ENCODE measurements at regions of chr10 and their contacts with region 1.

Region 1: DNA sequence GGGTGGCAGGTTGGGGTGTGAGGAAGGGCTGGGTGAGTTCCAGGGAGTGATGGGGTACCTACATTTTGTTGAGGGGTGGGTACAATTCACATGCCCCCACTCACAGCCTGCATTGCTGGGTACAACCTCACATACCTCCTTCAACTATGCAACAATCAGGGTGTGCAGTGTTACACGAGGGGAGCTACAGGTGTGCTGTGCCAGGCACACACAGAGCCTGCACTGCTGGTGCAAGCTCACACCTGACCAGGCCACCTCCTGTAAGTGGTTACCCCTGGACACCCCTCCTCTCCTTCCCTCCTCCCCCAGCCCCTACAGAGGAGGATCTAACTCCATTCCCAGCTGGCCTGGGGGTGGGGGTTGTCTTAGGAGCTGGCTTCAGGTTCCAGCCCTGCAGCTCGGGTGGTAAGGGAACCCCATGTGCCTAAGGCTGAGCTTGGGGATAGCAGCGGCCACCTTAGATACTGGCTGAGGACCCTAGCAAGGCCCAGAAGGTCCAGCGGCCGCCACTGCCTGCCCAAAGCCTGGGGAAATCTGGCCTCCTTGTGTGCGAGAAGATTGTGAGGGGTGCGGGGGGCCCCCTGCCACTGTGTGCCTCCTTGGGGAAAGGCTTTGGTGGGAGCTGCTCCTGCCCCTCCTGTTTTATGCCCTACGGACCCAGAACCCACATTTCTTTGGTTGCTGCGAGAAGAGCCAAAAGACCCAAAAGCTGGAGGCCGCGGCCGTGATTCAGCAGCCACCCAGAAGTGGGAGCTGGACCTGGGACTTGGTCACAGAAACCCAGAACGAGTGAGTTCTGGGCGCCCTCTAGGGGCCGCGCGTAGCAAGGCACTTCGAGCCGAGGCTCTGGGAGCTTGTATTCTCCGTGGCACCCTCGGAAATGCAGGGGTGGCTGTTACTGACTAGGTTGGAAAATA is 10.8 kb downstream of the TLX1 start:
- DNase-seq: peak; percentile 57 to 85 (median 77)
- ATAC-seq: peak; percentile 93
- H3K4me3 ChIP-seq: no peak overlapping the region
- H3K4me3 Mint-ChIP-seq: peak overlapping the region in 5 of 10 donors; percentile 9 to 53 (median 18)
- H3K27ac ChIP-seq: no peak overlapping the region
- H3K27ac Mint-ChIP-seq: no peak overlapping the region
- H3K4me1 ChIP-seq: peaks cover 0 to 19% of the 10 kb centered on the region in 2 donors
- H3K4me1 Mint-ChIP-seq: peaks cover 10 to 38% (median 26%) of the 10 kb centered on the region in 7 donors
- H3K27me3 ChIP-seq: peaks cover 9 to 43% of the 10 kb centered on the region in 2 donors
- H3K27me3 Mint-ChIP-seq: peaks cover 74 to 97% (median 83%) of the 10 kb centered on the region in 5 donors

Region 2: DNA sequence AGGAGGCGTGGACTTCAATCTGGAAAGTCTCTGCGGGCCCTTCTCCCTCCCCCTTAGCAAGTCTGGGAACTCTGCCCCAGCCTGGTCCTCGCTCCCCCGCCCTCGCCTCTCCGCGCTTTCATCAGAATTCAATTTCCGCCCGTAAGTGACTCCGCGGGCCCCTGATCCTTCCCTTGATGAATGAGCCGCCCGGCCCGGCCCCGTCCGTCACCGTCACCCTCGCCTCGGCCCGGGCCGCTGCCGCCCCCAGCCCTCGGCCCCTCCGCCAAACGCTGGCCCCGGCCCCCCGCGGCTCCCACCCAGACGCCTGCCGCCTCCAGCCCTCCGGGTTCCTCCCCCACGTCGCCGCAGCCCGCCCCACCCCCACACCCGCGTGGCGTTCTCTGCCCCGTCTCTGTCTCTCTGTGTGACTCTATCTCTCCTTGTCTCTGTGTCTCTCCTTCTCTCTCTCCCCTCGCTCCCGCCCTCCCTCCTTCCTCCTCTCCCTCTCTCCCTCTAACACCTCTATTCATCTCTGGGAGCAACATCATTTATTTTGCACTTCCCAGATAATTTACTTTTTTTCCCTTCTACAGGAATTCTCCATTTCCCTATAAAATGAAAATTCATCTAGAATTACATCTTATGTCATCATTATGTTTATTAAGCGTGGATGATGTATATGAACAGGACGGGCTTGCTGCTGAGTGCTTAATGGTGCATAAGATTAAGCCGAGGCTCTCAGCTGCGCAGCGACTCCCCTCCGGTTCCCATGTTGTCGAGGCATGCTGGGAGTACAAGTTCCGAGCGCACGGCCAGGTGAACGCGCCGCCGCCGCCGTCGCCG is 487.7 kb before region 1 on chr10:
- CTCF ChIA-PET with region 1: no interaction called
- POLR2A ChIA-PET with region 1: no interaction called
- intact Hi-C with region 1: loop called in 1 of 2 experiments (anchors 5 kb)
- DNase-seq: peak in 1 of 9 donors; percentile 36
- ATAC-seq: peak; percentile 28
- H3K4me3 ChIP-seq: no peak overlapping the region
- H3K4me3 Mint-ChIP-seq: peak overlapping the region; percentile 64 to 92 (median 85)
- H3K27ac ChIP-seq: no peak overlapping the region
- H3K27ac Mint-ChIP-seq: no peak overlapping the region
- H3K4me1 ChIP-seq: peaks cover 4 to 16% of the 10 kb centered on the region in 2 donors
- H3K4me1 Mint-ChIP-seq: peaks cover 18 to 35% (median 27%) of the 10 kb centered on the region in 7 donors
- H3K27me3 ChIP-seq: peaks cover 19 to 27% of the 10 kb centered on the region in 2 donors
- H3K27me3 Mint-ChIP-seq: peaks cover 68 to 76% (median 75%) of the 10 kb centered on the region in 5 donors

Region 3: GRCh38 chr10:101042667-101043355 is 99.1 kb before region 1 on chr10:
- CTCF ChIA-PET with region 1: interaction called, 21 read pairs
- POLR2A ChIA-PET with region 1: no interaction called
- intact Hi-C with region 1: loop called (anchors 1 to 5 kb)
- DNase-seq: peak; percentile 49 to 86 (median 57)
- ATAC-seq: peak; percentile 87
- H3K4me3 ChIP-seq: peak overlapping the region; percentile 82
- H3K4me3 Mint-ChIP-seq: peak overlapping the region; percentile 86 to 99 (median 94)
- H3K27ac ChIP-seq: peak overlapping the region; percentile 67
- H3K27ac Mint-ChIP-seq: peak overlapping the region; percentile 81 to 96 (median 88)
- H3K4me1 ChIP-seq: peaks cover 5 to 14% of the 10 kb centered on the region in 2 donors
- H3K4me1 Mint-ChIP-seq: peaks cover 20 to 27% (median 24%) of the 10 kb centered on the region in 7 donors
- H3K27me3 ChIP-seq: no peaks in the 10 kb centered on the region
- H3K27me3 Mint-ChIP-seq: peaks cover 10 to 44% (median 21%) of the 10 kb centered on the region in 5 donors

Region 4: DNA sequence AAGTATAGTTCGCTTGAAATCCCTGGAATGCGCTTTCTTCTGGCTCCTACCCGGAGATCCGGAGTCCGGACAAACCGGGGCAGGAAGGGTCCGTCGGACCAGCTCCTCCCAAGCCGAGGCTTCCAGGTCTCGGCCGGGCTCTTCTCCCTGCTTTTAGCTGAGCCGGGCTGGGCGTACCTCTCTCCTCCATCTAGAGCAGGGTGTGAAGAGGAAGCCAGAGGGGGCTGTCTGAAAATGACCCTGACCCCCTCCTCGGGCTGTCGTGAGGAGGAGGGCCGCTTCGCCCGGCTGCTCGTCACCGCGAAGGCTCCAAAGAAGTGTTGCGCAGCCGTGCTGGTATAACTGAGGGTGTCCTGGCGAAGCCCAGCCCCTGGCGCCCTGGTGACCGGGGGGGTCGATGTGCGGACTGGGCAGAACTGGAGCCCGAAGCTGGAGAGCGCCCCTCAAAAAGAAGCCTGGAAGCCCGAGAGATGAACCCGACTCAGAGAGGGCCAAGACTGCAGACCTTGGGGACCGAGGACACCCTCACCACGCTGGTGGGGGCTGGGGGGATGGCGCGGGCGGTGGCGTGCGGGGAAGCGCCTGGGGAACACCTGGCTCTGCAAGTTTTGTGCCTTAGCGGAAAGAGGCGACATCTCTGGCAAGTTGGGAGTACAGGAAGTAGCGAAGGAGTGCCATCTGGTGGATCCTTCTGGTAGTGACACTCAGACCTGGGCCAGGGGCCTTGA is 74.4 kb before region 1 on chr10:
- CTCF ChIA-PET with region 1: interaction called, 4 read pairs
- POLR2A ChIA-PET with region 1: no interaction called
- intact Hi-C with region 1: loop called in 1 of 2 experiments (anchors 2 kb)
- DNase-seq: peak; percentile 45 to 79 (median 70)
- ATAC-seq: peak; percentile 71
- H3K4me3 ChIP-seq: peak overlapping the region; percentile 86
- H3K4me3 Mint-ChIP-seq: peak overlapping the region; percentile 84 to 94 (median 90)
- H3K27ac ChIP-seq: no peak overlapping the region
- H3K27ac Mint-ChIP-seq: peak overlapping the region in 1 of 9 donors; percentile 36
- H3K4me1 ChIP-seq: peaks cover 5 to 24% of the 10 kb centered on the region in 2 donors
- H3K4me1 Mint-ChIP-seq: peaks cover 5 to 31% (median 17%) of the 10 kb centered on the region in 7 donors
- H3K27me3 ChIP-seq: peaks cover 12 to 26% of the 10 kb centered on the region in 2 donors
- H3K27me3 Mint-ChIP-seq: peaks cover 40 to 58% (median 44%) of the 10 kb centered on the region in 5 donors

Region 5: DNA sequence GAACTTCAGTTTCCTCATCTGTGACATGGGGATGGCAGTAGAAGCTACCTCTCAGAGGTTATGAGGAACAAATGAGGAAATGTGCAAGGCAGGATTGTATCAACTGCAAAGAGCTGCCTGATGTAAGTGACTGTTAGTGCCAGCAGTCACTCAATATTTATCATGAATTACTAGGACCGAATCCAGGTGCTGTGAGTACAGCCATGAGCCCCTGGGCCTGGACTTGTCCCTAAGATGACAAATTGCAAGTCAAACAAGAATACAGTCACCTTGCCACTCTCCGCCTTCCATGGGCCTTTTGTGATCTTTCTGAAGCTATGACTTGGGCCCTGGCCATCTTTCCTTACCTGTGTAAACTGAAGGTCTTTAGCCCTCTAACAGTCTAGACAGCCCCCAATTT is 38.4 kb before region 1 on chr10:
- CTCF ChIA-PET with region 1: interaction called, 204 read pairs
- POLR2A ChIA-PET with region 1: interaction called, 3 read pairs
- intact Hi-C with region 1: no loop called
- DNase-seq: no peak
- ATAC-seq: no peak
- H3K4me3 ChIP-seq: no peak overlapping the region
- H3K4me3 Mint-ChIP-seq: no peak overlapping the region
- H3K27ac ChIP-seq: no peak overlapping the region
- H3K27ac Mint-ChIP-seq: no peak overlapping the region
- H3K4me1 ChIP-seq: no peaks in the 10 kb centered on the region
- H3K4me1 Mint-ChIP-seq: no peaks in the 10 kb centered on the region
- H3K27me3 ChIP-seq: no peaks in the 10 kb centered on the region
- H3K27me3 Mint-ChIP-seq: peaks cover 37 to 65% (median 49%) of the 10 kb centered on the region in 5 donors

Region 6: DNA sequence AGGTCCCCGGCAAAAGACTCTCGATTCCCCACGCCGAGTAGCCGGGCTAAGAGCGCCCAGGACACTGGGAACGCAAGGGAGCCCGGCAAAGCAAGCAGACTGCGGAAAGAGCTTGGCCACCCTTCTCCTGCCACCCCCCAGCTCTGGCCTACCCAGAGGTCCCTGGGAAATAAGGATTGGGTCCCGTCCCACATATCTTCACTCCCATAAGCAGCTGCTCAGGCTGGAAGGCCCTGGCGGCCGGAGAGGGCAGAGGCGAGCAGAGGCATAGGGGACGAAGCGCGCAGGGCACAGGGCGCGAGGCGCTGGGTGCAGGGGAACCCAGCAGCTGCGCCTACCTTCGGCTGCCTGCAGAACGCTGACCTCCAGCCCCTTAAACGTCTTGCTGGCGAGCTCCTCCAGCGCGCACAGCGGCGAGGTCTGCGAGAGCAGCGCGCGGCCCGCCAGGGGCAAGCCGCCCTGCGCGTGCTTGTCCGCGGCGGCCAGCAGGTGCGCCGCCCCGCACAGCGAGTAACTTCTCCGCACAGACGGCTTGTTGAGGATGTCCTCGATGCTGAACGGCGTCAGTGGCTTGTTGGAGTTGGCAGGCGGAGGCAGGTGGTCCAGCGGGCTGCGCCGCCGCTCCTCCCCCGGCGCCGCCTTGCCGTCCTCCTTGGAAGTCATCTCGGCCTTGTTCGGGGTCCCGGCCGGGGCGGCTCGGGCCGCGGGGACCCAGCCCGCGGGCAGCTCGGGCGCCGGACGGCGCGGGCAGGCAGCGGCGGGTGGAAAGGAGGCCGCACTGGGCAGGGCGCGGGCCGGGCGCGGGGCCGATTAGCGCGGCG is 86.5 kb after region 1 on chr10:
- CTCF ChIA-PET with region 1: no interaction called
- POLR2A ChIA-PET with region 1: no interaction called
- intact Hi-C with region 1: loop called in 1 of 2 experiments (anchors 2 kb)
- DNase-seq: no peak
- ATAC-seq: no peak
- H3K4me3 ChIP-seq: no peak overlapping the region
- H3K4me3 Mint-ChIP-seq: peak overlapping the region; percentile 42 to 80 (median 74)
- H3K27ac ChIP-seq: no peak overlapping the region
- H3K27ac Mint-ChIP-seq: peak overlapping the region in 1 of 9 donors; percentile 79
- H3K4me1 ChIP-seq: peaks cover 27 to 48% of the 10 kb centered on the region in 2 donors
- H3K4me1 Mint-ChIP-seq: peaks cover 26 to 52% (median 40%) of the 10 kb centered on the region in 7 donors
- H3K27me3 ChIP-seq: peaks cover 18 to 54% of the 10 kb centered on the region in 2 donors
- H3K27me3 Mint-ChIP-seq: peaks cover 71 to 78% (median 74%) of the 10 kb centered on the region in 5 donors

Measured in naive thymus-derived CD4-positive, alpha-beta T cell (primary cell).